Dorsolateral prefrontal cortex (tissue), 120 donors: ENCODE measurements at regions of chr2 and their contacts with region 1.

Region 1: DNA sequence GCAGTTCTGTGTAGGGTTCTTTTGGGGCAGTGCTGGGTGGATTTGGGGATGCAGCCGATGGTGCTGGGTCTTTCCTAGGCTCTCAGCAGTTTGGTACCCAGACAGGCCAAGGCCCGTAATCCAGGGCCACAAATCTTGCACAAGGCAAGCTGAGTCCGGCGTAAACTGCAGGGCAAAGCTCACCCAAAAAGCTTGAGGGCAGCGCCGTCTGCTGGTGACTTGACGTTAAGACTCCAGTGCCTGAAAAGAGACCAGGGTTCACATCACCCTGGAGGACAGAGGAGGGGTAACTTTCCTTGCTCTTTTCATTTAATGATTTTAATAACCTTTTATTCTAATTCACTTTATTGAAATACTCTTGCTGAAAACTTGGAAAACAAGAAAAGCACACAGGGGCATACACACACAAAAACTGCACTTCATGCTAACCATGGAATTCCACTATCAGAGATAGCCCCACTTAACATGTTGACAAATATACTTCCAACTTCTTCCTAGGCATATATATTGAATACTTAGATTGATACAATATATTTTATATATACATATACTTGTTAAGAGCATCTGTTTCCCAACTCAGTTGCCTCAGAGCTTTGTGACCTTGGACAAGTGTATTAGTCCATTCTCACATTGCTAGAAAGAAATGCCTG is 38.9 kb downstream of the CNGA3 start:
- DNase-seq: peak; percentile 71 to 89 (median 84)
- H3K4me3 ChIP-seq: no peak overlapping the region
- H3K27ac ChIP-seq: peak overlapping the region in 2 of 59 donors; percentile 22 to 49
- H3K27me3 ChIP-seq: no peaks in the 10 kb centered on the region
- CTCF ChIP-seq: peak; percentile 86 to 99 (median 97)

Region 2: GRCh38 chr2:97697252-97698235 is 687.6 kb before region 1 on chr2:
- intact Hi-C with region 1: loop called in 1 of 2 experiments (anchors 5 kb)
- DNase-seq: peak; percentile 89 to 98 (median 92)
- H3K4me3 ChIP-seq: peak overlapping the region in 25 of 59 donors; percentile 5 to 52 (median 21)
- H3K27ac ChIP-seq: peak overlapping the region in 11 of 59 donors; percentile 0 to 55 (median 19)
- H3K27me3 ChIP-seq: no peaks in the 10 kb centered on the region
- CTCF ChIP-seq: peak; percentile 95 to 100 (median 99)

Region 3: GRCh38 chr2:97806738-97807618 is 578.2 kb before region 1 on chr2:
- intact Hi-C with region 1: loop called (anchors 2 to 5 kb)
- DNase-seq: peak; percentile 78 to 88 (median 83)
- H3K4me3 ChIP-seq: no peak overlapping the region
- H3K27ac ChIP-seq: peak overlapping the region in 2 of 59 donors; percentile 20 to 36
- H3K27me3 ChIP-seq: no peaks in the 10 kb centered on the region
- CTCF ChIP-seq: peak; percentile 64 to 99 (median 93)

Region 4: GRCh38 chr2:97995734-97996624 is 389.2 kb before region 1 on chr2 and contains the start of gene TMEM131:
- intact Hi-C with region 1: loop called (anchors 5 to 10 kb)
- DNase-seq: peak; percentile 83 to 97 (median 91)
- H3K4me3 ChIP-seq: peak within 1 kb of the TSS; percentile 66 to 98 (median 89)
- H3K27ac ChIP-seq: peak within 1 kb of the TSS; percentile 87 to 100 (median 98)
- H3K27me3 ChIP-seq: no peaks in the 10 kb centered on the region
- CTCF ChIP-seq: peak in 15 of 56 donors; percentile 8 to 50 (median 23)
- total RNA-seq, gene TMEM131: 31.4 to 58.3 (median 45.6) TPM

Region 5: GRCh38 chr2:98149333-98149697 is 235.9 kb before region 1 on chr2:
- intact Hi-C with region 1: loop called in 1 of 2 experiments (anchors 10 kb)
- DNase-seq: no peak
- H3K4me3 ChIP-seq: peak overlapping the region in 53 of 59 donors; percentile 2 to 58 (median 38)
- H3K27ac ChIP-seq: peak overlapping the region in 51 of 59 donors; percentile 6 to 86 (median 65)
- H3K27me3 ChIP-seq: no peaks in the 10 kb centered on the region
- CTCF ChIP-seq: peak in 43 of 56 donors; percentile 8 to 67 (median 37)

Region 6: GRCh38 chr2:98422449-98422848 is 37.3 kb after region 1 on chr2:
- intact Hi-C with region 1: no loop called
- DNase-seq: no peak
- H3K4me3 ChIP-seq: no peak overlapping the region
- H3K27ac ChIP-seq: no peak overlapping the region
- H3K27me3 ChIP-seq: no peaks in the 10 kb centered on the region
- CTCF ChIP-seq: no peak